ENCODE measurements at regions of chr6 and their contacts with region 1.

Region 1: GRCh38 chr6:28923318-28924102 is at the start of gene TRIM27:
- DNase-seq: peak; percentile 86

Region 2: GRCh38 chr6:28910902-28911690 is 12.4 kb before region 1 on chr6:
- CTCF ChIA-PET with region 1: interaction called, 3 read pairs
- POLR2A ChIA-PET with region 1: interaction called, 10 read pairs
- DNase-seq: no peak

Region 3: GRCh38 chr6:28940858-28941680 is 17.6 kb after region 1 on chr6:
- CTCF ChIA-PET with region 1: interaction called, 4 read pairs
- POLR2A ChIA-PET with region 1: interaction called, 57 read pairs
- DNase-seq: peak; percentile 51

Measured in HEK293T (cell line).